Activated CD8-positive, alpha-beta T cell treated with anti-CD3 and anti-CD28 coated beads, Interleukin-2, amount 10 ng/mL, durations not matched to agents 7 days and 5 days (primary cell): ENCODE measurements at regions of chrX and their contacts with region 1.

Region 1: DNA sequence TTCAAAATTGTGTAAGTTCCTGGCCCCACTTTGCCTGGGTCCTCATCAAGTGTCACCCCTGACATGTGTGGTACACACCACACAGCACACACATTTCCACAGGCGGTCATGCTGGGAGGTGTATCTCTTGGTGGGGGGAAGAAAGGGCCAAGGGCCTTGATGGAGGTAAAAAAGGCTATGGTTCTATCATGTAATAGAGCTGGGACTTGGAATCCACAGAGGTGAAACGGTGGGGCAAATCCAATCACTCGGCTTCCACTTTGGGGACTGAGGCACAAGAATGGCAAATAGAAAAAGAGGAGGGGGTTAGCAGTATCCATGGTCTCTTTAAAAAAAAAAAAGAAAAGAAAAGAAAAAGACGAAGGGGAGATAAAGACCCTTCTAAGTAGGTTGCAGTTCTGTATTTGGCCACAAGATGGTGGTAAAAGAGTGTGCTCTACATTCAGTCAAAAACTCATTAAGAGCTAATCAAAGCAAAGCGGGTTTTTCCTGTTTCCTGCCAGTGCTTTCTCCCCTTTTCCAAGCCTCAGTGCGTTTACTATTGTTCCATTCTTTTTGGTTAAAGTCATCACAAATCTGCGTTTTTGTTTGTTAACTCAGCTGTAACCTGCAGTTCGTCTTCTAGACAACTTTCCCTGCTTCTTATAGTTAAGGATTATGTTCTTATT is 37.0 kb upstream of the ATP6AP2 start:
- DNase-seq: peak; percentile 25
- ATAC-seq: no peak
- H3K4me3 Mint-ChIP-seq: peak overlapping the region; percentile 25
- H3K27ac Mint-ChIP-seq: no peak overlapping the region
- H3K4me1 Mint-ChIP-seq: peaks cover 21% of the 10 kb centered on the region
- H3K27me3 Mint-ChIP-seq: peaks cover 3% of the 10 kb centered on the region

Region 2: DNA sequence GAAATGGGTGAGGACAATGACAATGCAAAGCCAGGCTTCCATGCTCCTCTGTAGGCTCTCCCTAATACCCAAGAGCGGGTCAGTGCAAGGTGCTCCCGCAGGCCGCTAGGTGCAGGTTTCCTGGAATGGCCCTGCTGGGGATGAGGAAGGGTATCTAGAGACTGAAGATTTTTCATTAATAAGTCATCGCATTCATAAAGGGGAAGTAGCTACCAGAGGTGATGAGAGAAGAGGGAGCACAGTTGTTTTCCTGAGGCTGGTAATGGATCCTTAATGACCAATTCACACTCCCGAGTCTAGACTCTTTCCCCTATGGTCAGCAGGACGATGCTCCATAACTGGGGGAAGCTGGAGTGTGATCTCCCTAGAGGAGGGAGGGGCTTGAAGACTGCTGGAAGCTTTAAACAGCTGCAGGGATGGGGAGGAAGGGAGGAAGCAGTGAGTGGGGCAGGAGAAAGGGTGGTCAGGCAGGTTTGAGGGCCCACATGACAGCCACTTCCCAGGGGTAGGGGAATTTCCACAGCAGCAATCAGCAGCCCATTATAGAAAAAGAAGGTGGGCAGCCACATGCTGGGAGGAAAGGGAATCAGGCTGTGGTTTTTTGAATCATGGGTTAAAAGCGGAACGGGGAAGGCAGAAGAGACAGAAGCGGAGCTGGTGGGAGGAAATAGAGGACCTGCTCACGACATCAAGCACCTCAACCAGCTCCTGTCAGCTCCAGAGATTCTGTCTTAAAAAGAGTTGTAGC is 26.7 kb after region 1 on chrX:
- CTCF ChIA-PET with region 1: interaction called, 11 read pairs
- POLR2A ChIA-PET with region 1: no interaction called
- DNase-seq: peak; percentile 23
- ATAC-seq: peak; percentile 63
- H3K4me3 Mint-ChIP-seq: peak overlapping the region; percentile 71
- H3K27ac Mint-ChIP-seq: peak overlapping the region; percentile 81
- H3K4me1 Mint-ChIP-seq: peaks cover 16% of the 10 kb centered on the region
- H3K27me3 Mint-ChIP-seq: no peaks in the 10 kb centered on the region

Region 3: DNA sequence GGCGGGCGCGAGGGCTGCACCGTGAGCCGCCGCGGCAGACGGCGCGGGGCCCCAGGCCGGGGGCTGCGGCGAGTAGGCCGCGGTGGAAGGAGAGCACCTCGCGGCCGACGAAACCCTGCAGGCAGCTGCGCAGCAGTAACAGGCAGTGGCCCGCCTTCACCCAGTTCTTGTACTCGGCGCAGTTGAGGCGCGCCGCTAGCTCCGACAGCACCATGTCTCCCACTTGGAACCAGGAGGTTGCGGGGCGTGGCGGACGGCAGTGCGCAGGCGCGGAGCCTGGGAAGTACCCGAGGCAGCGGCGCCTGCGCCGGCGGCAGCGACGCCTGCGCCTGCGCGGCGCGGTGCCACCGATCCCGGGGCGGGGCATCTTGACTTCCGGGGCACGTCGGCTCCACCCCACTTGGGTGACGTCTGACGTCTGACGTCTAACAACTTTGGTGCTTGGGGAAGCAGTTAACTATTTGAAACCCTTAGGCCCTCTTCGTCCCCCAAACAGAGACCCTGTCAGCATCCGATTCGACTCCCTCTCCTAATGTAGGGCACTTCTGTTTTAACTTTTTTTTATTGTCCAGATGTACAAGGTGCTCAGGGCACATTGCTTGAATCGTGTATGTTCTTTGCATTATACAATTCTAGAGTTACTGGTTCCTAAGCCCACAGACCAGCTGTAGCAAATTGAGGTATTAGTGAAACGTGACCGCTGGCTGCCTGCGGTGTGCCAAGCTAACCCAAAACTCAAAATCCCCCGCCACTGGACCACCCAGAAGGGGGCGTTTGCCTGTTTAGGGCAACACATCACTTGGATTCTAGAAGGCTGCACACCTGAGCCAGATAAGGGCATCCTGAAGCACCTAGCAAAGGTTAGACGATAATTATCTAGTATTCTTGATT is 103.8 kb after region 1 on chrX and contains the start of gene CXorf38:
- CTCF ChIA-PET with region 1: interaction called, 20 read pairs
- POLR2A ChIA-PET with region 1: interaction called, 3 read pairs
- DNase-seq: peak; percentile 92
- ATAC-seq: peak; percentile 81
- H3K4me3 Mint-ChIP-seq: peak within 1 kb of the TSS; percentile 94
- H3K27ac Mint-ChIP-seq: peak within 1 kb of the TSS; percentile 96
- H3K4me1 Mint-ChIP-seq: peaks cover 12% of the 10 kb centered on the region
- H3K27me3 Mint-ChIP-seq: no peaks in the 10 kb centered on the region
- total RNA-seq, gene CXorf38: 19.3 to 19.9 TPM

Region 4: GRCh38 chrX:40792433-40792832 is 248.6 kb after region 1 on chrX:
- CTCF ChIA-PET with region 1: interaction called, 16 read pairs
- POLR2A ChIA-PET with region 1: no interaction called
- DNase-seq: no peak
- ATAC-seq: no peak
- H3K4me3 Mint-ChIP-seq: no peak overlapping the region
- H3K27ac Mint-ChIP-seq: no peak overlapping the region
- H3K4me1 Mint-ChIP-seq: peaks cover 9% of the 10 kb centered on the region
- H3K27me3 Mint-ChIP-seq: peaks cover 5% of the 10 kb centered on the region